ENCODE measurements at regions of chr13 and their contacts with region 1.

Region 1: GRCh38 chr13:39777527-39778061 is 122.1 kb downstream of the COG6 start:
- DNase-seq: peak; percentile 72
- H3K4me3 Mint-ChIP-seq: peak overlapping the region; percentile 47
- H3K27ac Mint-ChIP-seq: peak overlapping the region; percentile 92
- H3K4me1 Mint-ChIP-seq: peaks cover 36% of the 10 kb centered on the region
- H3K27me3 Mint-ChIP-seq: no peaks in the 10 kb centered on the region

Region 2: GRCh38 chr13:39586151-39586550 is 191.4 kb before region 1 on chr13:
- intact Hi-C with region 1: no loop called
- DNase-seq: no peak
- H3K4me3 Mint-ChIP-seq: no peak overlapping the region
- H3K27ac Mint-ChIP-seq: no peak overlapping the region
- H3K4me1 Mint-ChIP-seq: no peaks in the 10 kb centered on the region
- H3K27me3 Mint-ChIP-seq: peaks cover 3% of the 10 kb centered on the region

Region 3: GRCh38 chr13:39823063-39823713 is 45.6 kb after region 1 on chr13:
- intact Hi-C with region 1: loop called (anchors 5 kb)
- DNase-seq: no peak
- H3K4me3 Mint-ChIP-seq: peak overlapping the region; percentile 62
- H3K27ac Mint-ChIP-seq: no peak overlapping the region
- H3K4me1 Mint-ChIP-seq: peaks cover 20% of the 10 kb centered on the region
- H3K27me3 Mint-ChIP-seq: peaks cover 3% of the 10 kb centered on the region

Region 4: GRCh38 chr13:39952249-39953233 is 174.9 kb after region 1 on chr13:
- intact Hi-C with region 1: loop called (anchors 5 kb)
- DNase-seq: no peak
- H3K4me3 Mint-ChIP-seq: no peak overlapping the region
- H3K27ac Mint-ChIP-seq: peak overlapping the region; percentile 54
- H3K4me1 Mint-ChIP-seq: peaks cover 30% of the 10 kb centered on the region
- H3K27me3 Mint-ChIP-seq: peaks cover 5% of the 10 kb centered on the region

Region 5: GRCh38 chr13:40017662-40018262 is 240.2 kb after region 1 on chr13:
- intact Hi-C with region 1: no loop called
- DNase-seq: no peak
- H3K4me3 Mint-ChIP-seq: no peak overlapping the region
- H3K27ac Mint-ChIP-seq: no peak overlapping the region
- H3K4me1 Mint-ChIP-seq: peaks cover 5% of the 10 kb centered on the region
- H3K27me3 Mint-ChIP-seq: peaks cover 9% of the 10 kb centered on the region

Region 6: GRCh38 chr13:40371531-40372125 is 594.0 kb after region 1 on chr13:
- intact Hi-C with region 1: loop called (anchors 5 kb)
- DNase-seq: no peak
- H3K4me3 Mint-ChIP-seq: peak overlapping the region; percentile 62
- H3K27ac Mint-ChIP-seq: peak overlapping the region; percentile 54
- H3K4me1 Mint-ChIP-seq: peaks cover 39% of the 10 kb centered on the region
- H3K27me3 Mint-ChIP-seq: no peaks in the 10 kb centered on the region

Region 7: GRCh38 chr13:40682449-40683240 is 905.1 kb after region 1 on chr13:
- intact Hi-C with region 1: loop called (anchors 5 kb)
- DNase-seq: no peak
- H3K4me3 Mint-ChIP-seq: no peak overlapping the region
- H3K27ac Mint-ChIP-seq: no peak overlapping the region
- H3K4me1 Mint-ChIP-seq: peaks cover 13% of the 10 kb centered on the region
- H3K27me3 Mint-ChIP-seq: no peaks in the 10 kb centered on the region